Naive thymus-derived CD4-positive, alpha-beta T cell (primary cell): ENCODE measurements at regions of chr12 and their contacts with region 1.

Region 1: GRCh38 chr12:98644711-98645402 is at the starts of genes APAF1 and IKBIP:
- DNase-seq: peak; percentile 92 to 98 (median 96)
- ATAC-seq: peak; percentile 96
- H3K4me3 ChIP-seq: peak within 1 kb of the TSS; percentile 72
- H3K4me3 Mint-ChIP-seq: peak within 1 kb of the TSS; percentile 94 to 100 (median 98)
- H3K27ac ChIP-seq: peak within 1 kb of the TSS; percentile 76
- H3K27ac Mint-ChIP-seq: peak within 1 kb of the TSS; percentile 84 to 97 (median 93)
- H3K4me1 ChIP-seq: peaks cover 0 to 8% of the 10 kb centered on the region in 2 donors
- H3K4me1 Mint-ChIP-seq: peaks cover 7 to 40% (median 27%) of the 10 kb centered on the region in 7 donors
- H3K27me3 ChIP-seq: no peaks in the 10 kb centered on the region
- H3K27me3 Mint-ChIP-seq: no peaks in the 10 kb centered on the region
- total RNA-seq, gene APAF1: 22.8 to 36.4 (median 28.6) TPM
- total RNA-seq, gene IKBIP: 2.3 to 24.6 (median 6.1) TPM

Region 2: GRCh38 chr12:98503592-98504367 is 141.1 kb before region 1 on chr12:
- CTCF ChIA-PET with region 1: no interaction called
- POLR2A ChIA-PET with region 1: interaction called, 3 read pairs
- intact Hi-C with region 1: loop called (anchors 1 kb)
- DNase-seq: peak; percentile 89 to 95 (median 92)
- ATAC-seq: peak; percentile 94
- H3K4me3 ChIP-seq: peak overlapping the region; percentile 97
- H3K4me3 Mint-ChIP-seq: peak overlapping the region; percentile 89 to 99 (median 94)
- H3K27ac ChIP-seq: peak overlapping the region; percentile 90
- H3K27ac Mint-ChIP-seq: peak overlapping the region; percentile 95 to 100 (median 100)
- H3K4me1 ChIP-seq: peaks cover 0 to 11% of the 10 kb centered on the region in 2 donors
- H3K4me1 Mint-ChIP-seq: peaks cover 6 to 30% (median 23%) of the 10 kb centered on the region in 7 donors
- H3K27me3 ChIP-seq: no peaks in the 10 kb centered on the region
- H3K27me3 Mint-ChIP-seq: peaks cover 0 to 18% (median 3%) of the 10 kb centered on the region in 5 donors

Region 3: DNA sequence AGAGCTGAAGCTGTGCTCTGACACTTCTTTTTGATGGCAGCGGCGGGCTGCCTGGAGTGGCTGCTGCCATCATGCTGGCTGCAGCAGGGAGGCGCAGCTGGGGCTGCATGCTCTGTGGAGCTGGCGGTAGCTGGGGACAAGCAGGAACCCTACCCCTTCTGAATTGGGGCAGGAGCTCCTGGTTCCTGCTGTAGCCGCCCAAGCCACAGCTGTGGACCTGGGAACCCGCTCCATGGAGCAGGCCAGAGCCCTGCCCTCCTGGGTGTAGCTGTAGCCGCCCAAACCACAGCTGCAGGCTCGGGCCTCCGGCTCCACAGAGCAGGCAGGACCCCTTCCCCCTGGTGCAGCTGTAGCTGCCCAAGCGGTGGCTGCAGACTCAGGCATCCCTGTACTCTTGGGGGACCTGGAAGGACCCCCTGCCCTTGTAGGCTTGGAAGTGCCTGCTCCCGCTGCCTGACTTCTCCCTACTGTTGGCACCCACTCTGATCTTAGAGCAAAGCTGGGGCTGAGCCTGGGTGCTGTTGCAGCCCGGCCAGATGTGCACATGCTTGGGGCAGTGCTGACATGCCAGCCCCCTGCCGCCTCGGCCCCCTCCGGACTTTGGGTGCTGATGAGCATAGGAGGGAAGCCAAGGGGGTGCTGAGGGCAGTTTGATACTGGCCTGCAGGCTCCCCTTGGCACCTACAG is 33.5 kb after region 1 on chr12:
- CTCF ChIA-PET with region 1: no interaction called
- POLR2A ChIA-PET with region 1: no interaction called
- intact Hi-C with region 1: no loop called
- DNase-seq: no peak
- ATAC-seq: no peak
- H3K4me3 ChIP-seq: no peak overlapping the region
- H3K4me3 Mint-ChIP-seq: no peak overlapping the region
- H3K27ac ChIP-seq: no peak overlapping the region
- H3K27ac Mint-ChIP-seq: no peak overlapping the region
- H3K4me1 ChIP-seq: no peaks in the 10 kb centered on the region
- H3K4me1 Mint-ChIP-seq: peaks cover 0 to 4% (median 0%) of the 10 kb centered on the region in 7 donors
- H3K27me3 ChIP-seq: no peaks in the 10 kb centered on the region
- H3K27me3 Mint-ChIP-seq: no peaks in the 10 kb centered on the region